GM12878 (cell line): ENCODE measurements at regions of chr10 and their contacts with region 1.

Region 1: DNA sequence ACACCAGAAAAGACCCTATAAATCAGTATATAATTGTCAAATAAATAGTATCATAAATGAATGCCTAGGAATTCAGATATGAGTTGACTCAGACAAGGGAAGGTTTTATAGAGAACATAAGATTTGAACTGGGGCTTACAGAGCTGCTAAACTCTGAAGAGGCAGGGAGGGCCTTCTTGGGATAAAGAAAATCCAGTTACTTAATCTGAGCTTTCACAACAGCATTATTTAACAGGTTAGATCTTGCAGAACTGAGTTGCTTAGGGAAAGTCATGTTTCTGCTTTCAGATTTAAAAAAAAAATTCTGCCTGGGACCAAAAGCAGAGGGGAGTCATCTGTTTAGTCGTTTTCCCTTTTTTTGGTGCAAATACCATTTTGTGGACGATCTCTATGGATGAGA is 594.8 kb upstream of the FZD8 start:
- DNase-seq: no peak
- ATAC-seq: no peak
- H3K4me3 ChIP-seq: no peak overlapping the region
- H3K27ac ChIP-seq: no peak overlapping the region
- H3K4me1 ChIP-seq: no peaks in the 10 kb centered on the region
- H3K27me3 ChIP-seq: no peaks in the 10 kb centered on the region
- CTCF ChIP-seq: no peak
- EP300 ChIP-seq: no peak
- POLR2A ChIP-seq: no peak
- RAD21 ChIP-seq: no peak

Region 2: GRCh38 chr10:36200577-36200976 is 36.4 kb before region 1 on chr10:
- CTCF ChIA-PET with region 1: no interaction called
- POLR2A ChIA-PET with region 1: no interaction called
- RAD21 ChIA-PET with region 1: no interaction called
- SMC1A ChIA-PET with region 1: no interaction called
- in situ Hi-C with region 1: no loop called
- intact Hi-C with region 1: loop called (anchors 2 kb)
- DNase-seq: no peak
- ATAC-seq: no peak
- H3K4me3 ChIP-seq: no peak overlapping the region
- H3K27ac ChIP-seq: no peak overlapping the region
- H3K4me1 ChIP-seq: no peaks in the 10 kb centered on the region
- H3K27me3 ChIP-seq: no peaks in the 10 kb centered on the region
- CTCF ChIP-seq: no peak
- EP300 ChIP-seq: no peak
- POLR2A ChIP-seq: no peak
- RAD21 ChIP-seq: no peak

Region 3: GRCh38 chr10:36256158-36256557 is 19.2 kb after region 1 on chr10:
- CTCF ChIA-PET with region 1: no interaction called
- POLR2A ChIA-PET with region 1: no interaction called
- RAD21 ChIA-PET with region 1: no interaction called
- SMC1A ChIA-PET with region 1: no interaction called
- in situ Hi-C with region 1: no loop called
- intact Hi-C with region 1: no loop called
- DNase-seq: no peak
- ATAC-seq: no peak
- H3K4me3 ChIP-seq: no peak overlapping the region
- H3K27ac ChIP-seq: no peak overlapping the region
- H3K4me1 ChIP-seq: no peaks in the 10 kb centered on the region
- H3K27me3 ChIP-seq: no peaks in the 10 kb centered on the region
- CTCF ChIP-seq: no peak
- EP300 ChIP-seq: no peak
- POLR2A ChIP-seq: no peak
- RAD21 ChIP-seq: no peak